Activated CD8-positive, alpha-beta T cell treated with anti-CD3 and anti-CD28 coated beads for 36 hours (primary cell): ENCODE measurements at regions of chr1 and their contacts with region 1.

Region 1: DNA sequence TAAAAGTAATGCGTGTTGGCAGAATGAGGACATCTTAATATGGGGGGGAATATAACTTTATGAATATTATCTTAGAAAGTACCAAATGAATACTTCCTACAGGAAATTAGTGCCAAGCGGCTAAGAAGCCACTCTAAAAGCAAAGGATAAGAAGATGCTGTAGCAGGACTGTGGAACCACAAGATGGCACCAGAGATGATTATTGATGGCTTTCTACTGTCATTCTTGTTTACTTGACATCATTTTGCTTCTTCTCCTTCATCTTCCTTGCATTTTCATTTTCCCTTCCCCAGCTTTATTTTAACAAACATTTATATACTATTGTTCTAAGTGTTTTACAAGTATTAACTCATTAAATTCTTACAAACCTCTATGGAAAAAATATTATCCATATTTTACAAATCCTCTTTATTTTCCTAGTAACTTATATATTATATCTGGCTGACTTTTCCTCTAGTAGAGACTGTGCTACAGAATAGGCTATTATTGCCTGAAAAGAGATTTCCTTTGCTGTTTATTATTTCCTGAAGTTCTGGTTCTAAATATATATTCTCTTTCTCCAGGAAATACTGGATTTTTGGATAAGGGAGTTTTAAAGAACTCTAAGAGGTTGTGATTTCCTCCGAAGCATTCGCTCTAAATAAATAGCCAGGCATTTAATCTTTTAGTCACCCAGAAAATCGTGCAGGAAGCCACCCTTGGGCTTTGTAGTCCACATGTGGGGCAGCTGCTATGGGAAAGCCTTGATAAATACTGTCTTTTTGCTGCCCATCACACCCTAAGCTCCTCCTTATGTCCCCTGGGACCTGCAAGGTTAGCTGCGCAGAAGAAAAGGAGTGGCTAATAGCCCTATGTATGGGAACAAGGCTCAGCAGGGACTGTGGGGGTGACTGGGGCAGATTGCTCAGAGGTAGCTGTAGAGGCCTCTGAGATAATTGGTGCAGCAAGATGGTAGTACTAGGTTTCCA is 69.8 kb downstream of the TPR start:
- DNase-seq: peak; percentile 18
- ATAC-seq: peak; percentile 42
- H3K4me3 Mint-ChIP-seq: no peak overlapping the region
- H3K27ac Mint-ChIP-seq: peak overlapping the region; percentile 7
- H3K4me1 Mint-ChIP-seq: peaks cover 41% of the 10 kb centered on the region
- H3K27me3 Mint-ChIP-seq: no peaks in the 10 kb centered on the region
- CTCF ChIP-seq: peak; percentile 59

Region 2: DNA sequence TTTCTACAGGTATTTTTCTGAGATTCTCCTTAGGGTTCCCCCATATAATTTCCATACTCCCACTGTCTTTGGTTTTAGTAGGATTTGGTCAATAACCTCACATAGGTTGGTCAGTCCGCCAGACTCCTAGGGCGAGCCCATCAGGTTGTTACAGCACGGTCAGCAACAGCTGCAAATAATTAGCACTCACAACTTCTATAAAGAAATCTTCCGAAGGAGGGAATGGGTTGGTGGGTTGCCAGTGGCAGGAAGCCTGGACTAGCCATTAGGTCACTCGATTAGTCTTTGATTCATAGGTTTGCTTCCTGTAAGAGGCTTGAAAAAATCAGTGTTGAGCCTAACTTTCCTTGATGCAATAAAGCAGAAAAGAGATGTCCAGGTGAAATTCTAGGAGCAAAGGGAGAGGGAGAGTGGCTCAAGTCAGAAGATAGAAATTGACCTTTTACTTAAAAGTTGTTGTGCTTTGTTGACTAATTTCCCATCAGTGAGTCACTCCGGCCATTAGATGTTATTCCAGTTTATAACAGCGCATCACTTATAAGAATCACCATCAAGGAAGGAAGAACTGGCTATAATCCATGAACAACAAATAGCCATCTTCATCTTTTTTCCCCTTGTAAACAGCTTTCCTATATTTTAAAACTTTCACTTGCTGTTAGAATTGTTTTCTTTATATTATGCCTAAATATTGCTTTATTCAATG is 18.5 kb before region 1 on chr1:
- CTCF ChIA-PET with region 1: interaction called, 25 read pairs
- POLR2A ChIA-PET with region 1: interaction called, 3 read pairs
- intact Hi-C with region 1: no loop called
- DNase-seq: no peak
- ATAC-seq: no peak
- H3K4me3 Mint-ChIP-seq: no peak overlapping the region
- H3K27ac Mint-ChIP-seq: peak overlapping the region; percentile 14
- H3K4me1 Mint-ChIP-seq: peaks cover 32% of the 10 kb centered on the region
- H3K27me3 Mint-ChIP-seq: no peaks in the 10 kb centered on the region
- CTCF ChIP-seq: no peak

Region 3: DNA sequence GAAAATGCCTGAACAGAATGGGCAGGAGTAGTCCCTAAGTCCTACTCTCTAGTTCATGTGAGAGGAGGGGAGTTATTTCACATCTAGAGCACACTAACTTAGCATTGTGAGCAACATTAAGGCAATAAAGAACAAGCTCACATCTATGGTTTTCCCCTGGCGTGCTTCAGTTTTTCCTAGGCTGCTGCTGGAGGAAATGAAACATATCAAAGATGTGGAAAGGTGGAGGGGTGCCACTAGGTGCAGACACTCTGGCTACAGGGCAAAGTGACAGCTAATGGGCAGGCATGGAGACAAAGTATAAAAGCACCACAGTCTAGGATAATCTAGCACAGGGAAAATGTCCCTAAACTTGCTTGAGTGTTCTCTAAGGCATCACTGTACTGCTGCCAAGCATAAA is 12.4 kb before region 1 on chr1:
- CTCF ChIA-PET with region 1: interaction called, 25 read pairs
- POLR2A ChIA-PET with region 1: interaction called, 3 read pairs
- intact Hi-C with region 1: no loop called
- DNase-seq: no peak
- ATAC-seq: no peak
- H3K4me3 Mint-ChIP-seq: no peak overlapping the region
- H3K27ac Mint-ChIP-seq: no peak overlapping the region
- H3K4me1 Mint-ChIP-seq: peaks cover 36% of the 10 kb centered on the region
- H3K27me3 Mint-ChIP-seq: no peaks in the 10 kb centered on the region
- CTCF ChIP-seq: no peak

Region 4: GRCh38 chr1:186325239-186325638 is 20.0 kb after region 1 on chr1:
- CTCF ChIA-PET with region 1: interaction called, 12 read pairs
- POLR2A ChIA-PET with region 1: interaction called, 3 read pairs
- intact Hi-C with region 1: no loop called
- DNase-seq: no peak
- ATAC-seq: peak; percentile 47
- H3K4me3 Mint-ChIP-seq: no peak overlapping the region
- H3K27ac Mint-ChIP-seq: no peak overlapping the region
- H3K4me1 Mint-ChIP-seq: peaks cover 17% of the 10 kb centered on the region
- H3K27me3 Mint-ChIP-seq: no peaks in the 10 kb centered on the region
- CTCF ChIP-seq: peak; percentile 36